Aorta (tissue), 5 donors: ENCODE measurements at regions of chr4 and their contacts with region 1.

Region 1: GRCh38 chr4:6546681-6547447 is 28.1 kb upstream of the MAN2B2 start:
- DNase-seq: no peak
- ATAC-seq: no peak
- H3K4me3 ChIP-seq: no peak overlapping the region
- H3K27ac ChIP-seq: no peak overlapping the region
- H3K4me1 ChIP-seq: no peaks in the 10 kb centered on the region
- H3K27me3 ChIP-seq: no peaks in the 10 kb centered on the region

Region 2: DNA sequence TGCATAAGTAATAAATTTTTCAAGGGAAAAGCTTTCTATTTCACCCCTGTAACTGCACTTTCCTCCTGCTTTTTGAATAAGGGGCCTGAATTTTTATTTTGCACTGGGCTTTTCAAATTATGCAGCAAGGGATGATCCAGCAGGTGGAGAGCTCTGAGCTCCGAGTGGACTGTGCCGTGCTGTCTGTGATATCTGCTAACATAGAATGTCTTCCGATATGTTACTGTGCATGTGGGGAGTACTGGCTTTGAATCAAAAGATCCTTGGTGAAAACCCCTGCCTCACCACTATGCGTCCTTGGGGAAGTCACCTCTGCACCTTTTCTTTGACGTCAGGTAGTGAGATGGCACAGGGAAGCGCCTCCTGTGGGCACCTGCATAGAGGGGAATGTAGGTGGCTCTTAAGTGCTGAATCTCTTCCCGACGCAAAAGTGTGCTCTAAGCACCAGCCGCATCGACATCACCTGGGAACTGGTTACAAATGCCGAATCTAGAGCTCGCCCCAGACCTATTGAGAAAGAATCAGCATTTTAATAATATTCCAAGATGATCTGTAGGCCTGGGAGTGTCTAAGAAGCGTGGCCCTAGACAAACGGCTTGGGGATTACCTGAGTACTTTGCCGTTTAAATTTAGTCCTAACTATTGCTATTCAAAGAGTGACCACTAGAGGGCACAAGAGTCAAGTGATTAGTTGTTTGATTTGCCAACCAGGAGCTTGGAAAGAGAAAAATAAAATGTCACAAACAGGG is 296.5 kb before region 1 on chr4:
- intact Hi-C with region 1: loop called in 1 of 2 experiments (anchors 2 kb)
- DNase-seq: no peak
- ATAC-seq: no peak
- H3K4me3 ChIP-seq: no peak overlapping the region
- H3K27ac ChIP-seq: no peak overlapping the region
- H3K4me1 ChIP-seq: no peaks in the 10 kb centered on the region
- H3K27me3 ChIP-seq: no peaks in the 10 kb centered on the region

Region 3: DNA sequence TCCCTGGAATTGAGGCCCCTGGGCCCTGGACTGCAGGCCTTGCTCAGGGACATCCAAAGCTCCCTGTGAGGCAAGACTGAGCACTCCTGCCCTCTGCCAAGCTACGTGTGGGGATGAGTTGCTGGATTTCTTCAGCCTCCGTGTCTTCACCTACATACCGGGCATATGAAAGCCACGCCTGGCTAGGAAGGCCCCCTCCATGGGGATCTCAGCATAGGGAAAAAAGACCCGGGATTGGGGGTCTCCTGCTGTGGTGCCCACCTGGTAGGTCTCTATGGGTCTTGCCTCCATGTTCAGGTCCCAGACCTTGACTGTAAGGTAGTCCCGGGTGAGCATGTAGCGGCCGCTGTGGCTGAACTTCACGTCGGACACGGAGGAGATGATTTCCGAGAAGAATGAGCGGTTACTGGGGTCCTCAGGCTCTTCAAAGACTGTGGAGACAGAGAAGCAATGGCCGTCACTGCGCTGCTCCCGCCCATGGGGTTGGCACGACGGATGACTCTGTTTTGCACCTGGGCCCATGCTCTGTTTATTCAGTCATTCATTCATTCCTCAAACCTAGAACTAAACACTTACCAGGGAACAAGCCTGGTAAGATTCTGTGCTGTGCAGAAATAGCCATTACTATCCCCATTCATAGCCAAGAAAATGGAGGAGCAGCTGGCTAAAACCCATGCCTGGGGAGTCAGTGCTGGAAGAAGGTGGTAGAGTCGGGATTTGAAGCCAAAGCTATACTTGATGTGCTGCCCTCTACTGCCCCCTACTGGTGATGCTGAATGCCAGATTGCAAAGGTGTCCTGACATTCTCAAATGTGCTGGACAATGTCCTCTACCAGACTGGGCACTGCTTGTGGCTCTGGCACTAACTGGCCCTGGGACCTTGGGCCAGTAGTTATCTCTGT is 213.3 kb before region 1 on chr4:
- intact Hi-C with region 1: loop called in 1 of 2 experiments (anchors 2 kb)
- DNase-seq: peak; percentile 12 to 57
- ATAC-seq: no peak
- H3K4me3 ChIP-seq: no peak overlapping the region
- H3K27ac ChIP-seq: no peak overlapping the region
- H3K4me1 ChIP-seq: no peaks in the 10 kb centered on the region
- H3K27me3 ChIP-seq: no peaks in the 10 kb centered on the region

Region 4: GRCh38 chr4:6640292-6641163 is 93.7 kb after region 1 on chr4 and contains the start of gene MRFAP1:
- intact Hi-C with region 1: no loop called
- DNase-seq: peak; percentile 97 to 98
- ATAC-seq: peak; percentile 98
- H3K4me3 ChIP-seq: peak within 1 kb of the TSS; percentile 5 to 81
- H3K27ac ChIP-seq: peak within 1 kb of the TSS; percentile 38 to 89
- H3K4me1 ChIP-seq: peaks cover 0 to 6% of the 10 kb centered on the region in 2 donors
- H3K27me3 ChIP-seq: no peaks in the 10 kb centered on the region
- total RNA-seq, gene MRFAP1: 244 to 263 TPM